Tibial artery (tissue), 4 donors: ENCODE measurements at regions of chr9 and their contacts with region 1.

Region 1: DNA sequence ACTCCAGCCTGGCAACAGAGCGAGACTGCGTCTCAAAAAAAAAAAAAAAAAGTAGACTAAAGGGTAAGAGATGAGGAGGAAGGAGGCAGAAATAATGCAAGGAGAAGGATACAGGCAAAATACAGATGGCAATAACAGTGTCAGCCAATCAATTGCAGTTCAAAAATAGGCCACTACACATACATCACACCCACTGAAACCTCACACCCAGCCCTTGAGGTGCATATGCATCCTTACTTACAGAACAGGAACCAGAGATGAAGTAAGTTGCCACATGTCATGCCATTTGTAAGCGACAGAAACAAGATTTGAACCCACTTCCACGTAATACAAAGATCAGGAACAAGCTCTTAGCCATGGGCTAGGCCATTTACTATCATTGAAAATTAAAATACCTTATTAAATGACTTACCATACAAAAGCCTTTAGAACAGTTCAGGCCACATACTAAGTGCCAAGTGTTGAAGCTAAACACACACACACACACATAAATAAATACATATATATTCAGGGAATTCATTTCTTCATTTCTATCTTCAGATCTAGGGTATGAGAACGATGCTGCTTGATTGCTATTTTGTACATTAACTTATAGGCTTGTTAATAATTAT is 98.4 kb downstream of the FNBP1 start:
- DNase-seq: no peak
- H3K4me3 ChIP-seq: no peak overlapping the region
- H3K27ac ChIP-seq: peak overlapping the region; percentile 41 to 66
- H3K4me1 ChIP-seq: peaks cover 0 to 51% (median 14%) of the 10 kb centered on the region in 4 donors
- H3K27me3 ChIP-seq: no peaks in the 10 kb centered on the region
- CTCF ChIP-seq: no peak

Region 2: GRCh38 chr9:129981180-129981907 is 36.7 kb after region 1 on chr9:
- intact Hi-C with region 1: no loop called
- DNase-seq: peak; percentile 59 to 70
- H3K4me3 ChIP-seq: no peak overlapping the region
- H3K27ac ChIP-seq: no peak overlapping the region
- H3K4me1 ChIP-seq: peaks cover 0 to 14% (median 7%) of the 10 kb centered on the region in 4 donors
- H3K27me3 ChIP-seq: no peaks in the 10 kb centered on the region
- CTCF ChIP-seq: no peak

Region 3: GRCh38 chr9:130023144-130023787 is 78.7 kb after region 1 on chr9:
- intact Hi-C with region 1: loop called (anchors 10 kb)
- DNase-seq: peak in 1 of 2 donors; percentile 33
- H3K4me3 ChIP-seq: no peak overlapping the region
- H3K27ac ChIP-seq: peak overlapping the region; percentile 31 to 47
- H3K4me1 ChIP-seq: peaks cover 10 to 63% (median 31%) of the 10 kb centered on the region in 4 donors
- H3K27me3 ChIP-seq: no peaks in the 10 kb centered on the region
- CTCF ChIP-seq: no peak